Pancreas (tissue), 10 donors: ENCODE measurements at regions of chr10 and their contacts with region 1.

Region 1: DNA sequence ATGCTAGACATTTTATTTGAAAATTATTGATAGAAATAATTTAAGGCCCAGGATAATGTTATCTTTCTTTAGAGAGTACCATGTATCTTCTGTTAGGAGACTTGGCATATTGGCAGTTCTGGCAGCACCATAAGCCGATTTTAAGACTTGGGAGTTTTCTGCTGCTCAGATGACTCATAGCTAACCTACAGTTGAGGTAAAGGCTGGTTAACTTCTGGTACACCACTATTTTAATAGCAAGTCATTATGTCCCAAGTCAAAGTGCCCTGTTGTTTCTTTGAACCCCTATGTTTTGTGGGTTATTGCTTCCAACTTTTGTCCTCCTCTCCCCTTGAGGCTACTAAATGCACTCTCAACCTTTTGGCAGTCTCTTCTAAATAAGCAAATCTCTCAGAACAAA is 25.2 kb downstream of the ATRNL1 start:
- DNase-seq: no peak
- ATAC-seq: no peak
- H3K4me3 ChIP-seq: no peak overlapping the region
- H3K27ac ChIP-seq: no peak overlapping the region
- H3K4me1 ChIP-seq: no peaks in the 10 kb centered on the region
- H3K27me3 ChIP-seq: no peaks in the 10 kb centered on the region
- CTCF ChIP-seq: no peak

Region 2: DNA sequence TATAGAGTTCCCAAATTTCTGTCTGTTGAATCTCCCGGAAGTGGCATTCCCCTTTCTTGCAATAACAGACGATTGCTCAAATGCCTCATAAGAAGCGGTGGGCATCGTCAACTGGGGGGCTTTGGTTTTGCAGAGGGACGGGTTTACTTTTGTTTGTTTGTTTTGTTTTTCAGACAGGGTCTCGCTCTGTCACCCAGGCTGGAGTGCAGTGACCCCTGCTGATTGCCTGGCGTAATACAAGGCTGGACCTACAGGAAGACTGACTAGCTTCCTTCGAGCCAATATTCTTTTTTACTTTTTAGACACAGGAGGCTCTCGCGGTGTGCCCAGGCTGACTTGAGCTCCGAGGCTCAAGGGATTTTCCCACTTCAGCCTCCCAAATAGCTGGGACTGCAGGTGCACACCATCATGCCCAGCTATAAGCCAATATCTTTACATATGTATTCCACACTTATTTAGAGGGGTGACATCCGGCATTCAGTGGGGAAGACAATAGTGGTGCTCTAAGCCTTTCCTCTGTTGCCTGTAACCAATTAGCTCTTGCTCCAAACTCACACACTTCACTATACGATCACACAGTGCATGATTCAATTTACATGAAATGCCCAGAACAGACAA is 238.7 kb before region 1 on chr10:
- intact Hi-C with region 1: loop called in 1 of 3 experiments (anchors 10 kb)
- DNase-seq: peak in 1 of 6 donors; percentile 28
- ATAC-seq: peak in 2 of 4 donors; percentile 44 to 58
- H3K4me3 ChIP-seq: no peak overlapping the region
- H3K27ac ChIP-seq: no peak overlapping the region
- H3K4me1 ChIP-seq: peaks cover 0 to 4% (median 3%) of the 10 kb centered on the region in 3 donors
- H3K27me3 ChIP-seq: no peaks in the 10 kb centered on the region
- CTCF ChIP-seq: peak in 3 of 4 donors; percentile 9 to 35 (median 27)

Region 3: GRCh38 chr10:115073796-115074195 is 44.5 kb before region 1 on chr10:
- intact Hi-C with region 1: no loop called
- DNase-seq: no peak
- ATAC-seq: no peak
- H3K4me3 ChIP-seq: no peak overlapping the region
- H3K27ac ChIP-seq: no peak overlapping the region
- H3K4me1 ChIP-seq: no peaks in the 10 kb centered on the region
- H3K27me3 ChIP-seq: no peaks in the 10 kb centered on the region
- CTCF ChIP-seq: no peak